Psoas muscle (tissue), 8 donors: ENCODE measurements at regions of chr20 and their contacts with region 1.

Region 1: GRCh38 chr20:39874049-39874888 is 814.8 kb downstream of the MAFB start:
- DNase-seq: peak; percentile 63 to 78
- ATAC-seq: peak; percentile 67 to 81 (median 79)
- H3K4me3 ChIP-seq: no peak overlapping the region
- H3K27ac ChIP-seq: no peak overlapping the region
- H3K4me1 ChIP-seq: peaks cover 20% of the 10 kb centered on the region
- H3K27me3 ChIP-seq: no peaks in the 10 kb centered on the region
- CTCF ChIP-seq: peak; percentile 70

Region 2: DNA sequence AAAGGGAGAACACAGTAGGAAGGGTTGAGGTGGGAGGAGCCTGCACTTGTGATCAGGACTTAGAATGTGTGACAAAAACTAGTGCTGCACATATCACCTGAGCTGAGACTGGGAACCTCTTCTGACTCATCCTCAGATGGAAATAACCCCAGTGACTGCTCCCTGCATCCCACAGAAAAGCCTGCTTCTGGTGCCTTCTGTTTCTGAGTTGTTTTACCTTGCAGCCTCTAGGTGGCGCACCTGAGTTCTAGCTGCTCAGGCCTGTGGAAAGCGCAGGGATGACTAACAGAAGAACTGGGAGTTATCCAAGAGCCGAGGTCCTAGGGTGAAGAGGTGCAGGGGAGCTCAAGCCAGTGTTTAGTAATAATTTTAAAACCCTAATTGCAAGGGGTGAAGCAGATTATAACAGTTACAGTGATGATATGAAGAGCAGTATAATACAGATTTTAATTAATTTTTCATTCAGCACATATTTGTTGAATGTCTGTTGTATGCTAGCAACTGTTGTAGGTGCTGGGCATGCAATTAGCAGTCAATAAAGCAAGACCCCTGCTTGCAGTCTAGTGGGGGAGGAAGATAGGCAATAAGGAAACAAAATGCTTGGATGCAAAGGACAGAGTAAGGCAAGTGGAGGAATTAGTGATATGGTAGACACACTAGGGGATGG is 609.6 kb before region 1 on chr20:
- intact Hi-C with region 1: loop called in 1 of 2 experiments (anchors 10 kb)
- DNase-seq: peak; percentile 65 to 74
- ATAC-seq: peak; percentile 72 to 90 (median 88)
- H3K4me3 ChIP-seq: no peak overlapping the region
- H3K27ac ChIP-seq: no peak overlapping the region
- H3K4me1 ChIP-seq: no peaks in the 10 kb centered on the region
- H3K27me3 ChIP-seq: no peaks in the 10 kb centered on the region
- CTCF ChIP-seq: peak; percentile 79

Region 3: DNA sequence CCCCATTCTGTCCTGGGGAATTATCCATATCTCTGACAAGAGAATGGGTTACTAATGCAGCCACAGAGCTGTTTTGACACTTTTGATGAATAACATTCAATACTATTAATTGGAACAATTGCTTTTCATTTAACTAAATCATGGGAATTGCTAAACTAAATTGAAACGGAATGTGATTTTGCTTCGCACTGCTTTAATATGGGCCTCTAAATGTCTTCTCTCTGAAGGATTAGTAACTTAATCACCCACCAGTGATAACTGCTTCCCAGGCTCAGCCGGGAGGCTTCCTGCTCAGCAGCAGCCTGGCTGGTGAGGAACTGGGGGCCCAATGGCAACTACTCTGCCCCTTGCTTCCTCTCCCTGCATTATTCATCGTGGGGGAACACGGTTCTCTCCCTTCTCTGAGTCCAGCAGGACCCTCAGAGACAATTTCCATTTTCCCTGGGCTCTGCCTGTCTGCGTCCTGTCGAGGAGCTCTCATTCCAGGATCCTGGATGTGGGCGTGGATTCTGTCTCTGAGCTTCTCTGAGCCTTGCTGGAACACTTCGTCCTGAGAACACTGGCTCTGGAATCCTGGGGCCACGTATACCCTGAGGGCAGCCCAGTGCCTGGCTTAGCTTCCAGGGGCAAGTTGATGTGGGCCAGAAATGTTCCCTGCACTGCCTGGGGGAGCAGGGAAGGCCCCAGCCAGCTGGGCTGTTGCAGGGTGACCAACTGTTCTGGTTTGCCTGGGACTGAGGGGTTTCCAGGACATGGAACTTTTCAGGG is 603.2 kb before region 1 on chr20:
- intact Hi-C with region 1: loop called (anchors 5 to 10 kb)
- DNase-seq: no peak
- ATAC-seq: peak in 2 of 4 donors; percentile 19 to 26
- H3K4me3 ChIP-seq: no peak overlapping the region
- H3K27ac ChIP-seq: no peak overlapping the region
- H3K4me1 ChIP-seq: no peaks in the 10 kb centered on the region
- H3K27me3 ChIP-seq: no peaks in the 10 kb centered on the region
- CTCF ChIP-seq: no peak